Gastrocnemius medialis (tissue), 4 donors: ENCODE measurements at regions of chr1 and their contacts with region 1.

Region 1: GRCh38 chr1:203486618-203487370 is 7.2 kb upstream of the OPTC start:
- DNase-seq: no peak
- ATAC-seq: peak; percentile 26 to 32
- H3K4me3 ChIP-seq: peak overlapping the region; percentile 33 to 87 (median 56)
- H3K27ac ChIP-seq: peak overlapping the region; percentile 60 to 75 (median 70)
- H3K4me1 ChIP-seq: no peaks in the 10 kb centered on the region
- H3K27me3 ChIP-seq: no peaks in the 10 kb centered on the region
- CTCF ChIP-seq: no peak
- POLR2A ChIP-seq: no peak

Region 2: DNA sequence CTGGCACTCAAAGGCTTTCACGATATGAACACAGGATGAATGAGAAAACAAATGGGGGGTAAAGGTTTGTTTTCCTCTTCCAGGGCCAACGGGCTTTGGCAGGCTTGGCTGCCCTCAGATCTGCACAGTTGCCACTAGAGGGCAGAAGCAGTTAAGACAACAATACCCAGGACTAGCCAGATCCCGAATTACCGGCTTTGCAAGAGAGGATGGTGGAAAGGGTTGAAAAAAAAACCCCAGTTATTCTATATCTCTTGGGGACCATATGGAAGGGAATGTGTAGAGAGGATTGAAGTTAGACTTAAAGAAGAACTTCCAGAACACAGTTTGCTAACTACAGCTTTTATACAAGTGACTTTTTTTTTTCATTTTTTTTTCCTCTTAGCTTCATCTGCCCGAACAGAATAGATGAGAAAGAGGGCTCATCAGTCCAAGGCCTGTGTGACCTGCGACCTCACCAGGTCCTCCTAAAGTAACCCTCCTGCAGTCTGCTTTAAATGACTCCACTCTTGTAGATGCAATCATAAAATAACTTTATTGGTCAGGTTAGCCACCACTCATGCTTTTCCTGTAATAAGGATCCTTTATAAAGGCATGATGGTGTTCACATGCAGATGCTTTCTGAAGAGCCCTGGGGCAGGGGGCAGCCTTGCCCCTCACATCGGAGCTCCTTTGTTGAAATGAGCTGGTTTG is 146.5 kb before region 1 on chr1:
- in situ Hi-C with region 1: loop called (anchors 5 to 10 kb)
- intact Hi-C with region 1: loop called (anchors 1 kb)
- DNase-seq: peak; percentile 63 to 67
- ATAC-seq: peak; percentile 53 to 65
- H3K4me3 ChIP-seq: no peak overlapping the region
- H3K27ac ChIP-seq: peak overlapping the region; percentile 0 to 71 (median 26)
- H3K4me1 ChIP-seq: peaks cover 28 to 37% of the 10 kb centered on the region in 2 donors
- H3K27me3 ChIP-seq: no peaks in the 10 kb centered on the region
- CTCF ChIP-seq: peak; percentile 71 to 89 (median 87)
- POLR2A ChIP-seq: no peak

Region 3: GRCh38 chr1:203368624-203369451 is 118.0 kb before region 1 on chr1:
- in situ Hi-C with region 1: no loop called
- intact Hi-C with region 1: loop called (anchors 1 kb)
- DNase-seq: peak; percentile 75 to 83
- ATAC-seq: peak; percentile 89 to 91
- H3K4me3 ChIP-seq: no peak overlapping the region
- H3K27ac ChIP-seq: peak overlapping the region; percentile 37 to 59 (median 48)
- H3K4me1 ChIP-seq: peaks cover 0 to 7% of the 10 kb centered on the region in 2 donors
- H3K27me3 ChIP-seq: no peaks in the 10 kb centered on the region
- CTCF ChIP-seq: peak in 2 of 5 experiments; percentile 3 to 17
- POLR2A ChIP-seq: no peak

Region 4: GRCh38 chr1:203381151-203381751 is 105.5 kb before region 1 on chr1:
- in situ Hi-C with region 1: no loop called
- intact Hi-C with region 1: no loop called
- DNase-seq: no peak
- ATAC-seq: no peak
- H3K4me3 ChIP-seq: no peak overlapping the region
- H3K27ac ChIP-seq: no peak overlapping the region
- H3K4me1 ChIP-seq: no peaks in the 10 kb centered on the region
- H3K27me3 ChIP-seq: no peaks in the 10 kb centered on the region
- CTCF ChIP-seq: no peak
- POLR2A ChIP-seq: no peak